ENCODE measurements at regions of chr13 and their contacts with region 1.

Region 1: GRCh38 chr13:49606747-49607648 is 21.3 kb upstream of the ARL11 start:
- DNase-seq: peak; percentile 95
- H3K4me3 ChIP-seq: peak overlapping the region; percentile 72
- H3K27ac ChIP-seq: no peak overlapping the region
- H3K4me1 ChIP-seq: no peaks in the 10 kb centered on the region
- H3K27me3 ChIP-seq: no peaks in the 10 kb centered on the region

Region 2: DNA sequence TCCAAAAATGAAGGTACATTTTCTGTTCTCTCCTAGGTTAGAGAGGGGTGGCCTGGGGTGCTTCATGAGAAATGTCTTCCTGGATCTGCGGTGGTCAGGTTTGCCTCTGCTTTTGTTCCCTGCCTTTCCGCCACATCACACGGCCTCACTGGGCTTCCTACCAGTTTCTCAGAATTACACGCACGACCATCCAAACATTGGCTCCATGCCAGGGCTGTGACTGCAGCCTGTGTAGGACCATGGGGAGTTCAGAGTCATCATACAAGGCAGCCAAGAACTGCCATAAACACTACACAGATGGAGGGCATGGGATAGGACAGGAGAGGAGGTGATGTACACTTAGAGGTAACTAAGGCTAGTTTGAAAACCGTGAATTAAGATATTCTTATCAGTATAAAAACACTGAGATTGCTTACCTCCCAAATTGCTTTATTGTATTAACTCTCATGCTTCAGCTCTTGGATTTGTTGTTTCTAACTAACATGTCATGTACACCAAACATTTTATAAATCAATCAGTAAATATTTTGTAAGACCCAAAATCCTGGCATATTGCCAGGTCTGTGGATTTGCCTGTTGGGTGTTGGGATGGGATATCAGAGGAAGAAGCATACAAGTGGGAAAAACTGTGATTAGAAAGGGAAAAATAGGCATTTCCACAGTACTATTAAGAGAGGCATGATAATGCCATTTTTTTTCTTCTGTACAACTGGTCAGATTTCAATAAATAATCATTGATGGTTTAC is 314.1 kb before region 1 on chr13:
- in situ Hi-C with region 1: loop called (anchors 10 kb)
- DNase-seq: peak; percentile 7
- H3K4me3 ChIP-seq: no peak overlapping the region
- H3K27ac ChIP-seq: no peak overlapping the region
- H3K4me1 ChIP-seq: no peaks in the 10 kb centered on the region
- H3K27me3 ChIP-seq: no peaks in the 10 kb centered on the region

Region 3: GRCh38 chr13:49669735-49670309 is 62.8 kb after region 1 on chr13:
- in situ Hi-C with region 1: no loop called
- DNase-seq: peak; percentile 81
- H3K4me3 ChIP-seq: no peak overlapping the region
- H3K27ac ChIP-seq: no peak overlapping the region
- H3K4me1 ChIP-seq: peaks cover 7% of the 10 kb centered on the region; the same call in 1 of the 2 replicates
- H3K27me3 ChIP-seq: no peaks in the 10 kb centered on the region

Measured in GM23248 (cell line).